Common myeloid progenitor, CD34-positive (primary cell): ENCODE measurements at regions of chr7 and their contacts with region 1.

Region 1: GRCh38 chr7:155298834-155299534 is 1.3 kb downstream of the INSIG1 start:
- DNase-seq: peak; percentile 96 to 99 (median 98)
- H3K4me3 ChIP-seq: peak overlapping the region; percentile 69 to 88 (median 84)
- H3K27ac ChIP-seq: peak overlapping the region; percentile 85 to 93
- H3K4me1 ChIP-seq: peaks cover 14 to 50% (median 44%) of the 10 kb centered on the region in 4 experiments
- H3K27me3 ChIP-seq: no peaks in the 10 kb centered on the region

Region 2: GRCh38 chr7:155205368-155206317 is 93.3 kb before region 1 on chr7:
- CTCF ChIA-PET with region 1: interaction called, 7 read pairs
- POLR2A ChIA-PET with region 1: interaction called, 97 read pairs
- DNase-seq: peak; percentile 99 to 100 (median 99)
- H3K4me3 ChIP-seq: peak overlapping the region in 6 of 7 experiments; percentile 55 to 82 (median 65)
- H3K27ac ChIP-seq: peak overlapping the region; percentile 97 to 99
- H3K4me1 ChIP-seq: peaks cover 0 to 38% (median 27%) of the 10 kb centered on the region in 4 experiments
- H3K27me3 ChIP-seq: no peaks in the 10 kb centered on the region

Region 3: GRCh38 chr7:155283565-155284194 is 15.3 kb before region 1 on chr7:
- CTCF ChIA-PET with region 1: interaction called, 12 read pairs
- POLR2A ChIA-PET with region 1: interaction called, 12 read pairs
- DNase-seq: no peak
- H3K4me3 ChIP-seq: no peak overlapping the region
- H3K27ac ChIP-seq: no peak overlapping the region
- H3K4me1 ChIP-seq: peaks cover 0 to 68% (median 30%) of the 10 kb centered on the region in 4 experiments
- H3K27me3 ChIP-seq: no peaks in the 10 kb centered on the region

Region 4: GRCh38 chr7:156192921-156193320 is 893.9 kb after region 1 on chr7:
- CTCF ChIA-PET with region 1: no interaction called
- POLR2A ChIA-PET with region 1: no interaction called
- DNase-seq: no peak
- H3K4me3 ChIP-seq: no peak overlapping the region
- H3K27ac ChIP-seq: no peak overlapping the region
- H3K4me1 ChIP-seq: no peaks in the 10 kb centered on the region
- H3K27me3 ChIP-seq: peaks cover 0 to 3% (median 0%) of the 10 kb centered on the region in 5 experiments